ENCODE measurements at regions of chr18 and their contacts with region 1.

Region 1: DNA sequence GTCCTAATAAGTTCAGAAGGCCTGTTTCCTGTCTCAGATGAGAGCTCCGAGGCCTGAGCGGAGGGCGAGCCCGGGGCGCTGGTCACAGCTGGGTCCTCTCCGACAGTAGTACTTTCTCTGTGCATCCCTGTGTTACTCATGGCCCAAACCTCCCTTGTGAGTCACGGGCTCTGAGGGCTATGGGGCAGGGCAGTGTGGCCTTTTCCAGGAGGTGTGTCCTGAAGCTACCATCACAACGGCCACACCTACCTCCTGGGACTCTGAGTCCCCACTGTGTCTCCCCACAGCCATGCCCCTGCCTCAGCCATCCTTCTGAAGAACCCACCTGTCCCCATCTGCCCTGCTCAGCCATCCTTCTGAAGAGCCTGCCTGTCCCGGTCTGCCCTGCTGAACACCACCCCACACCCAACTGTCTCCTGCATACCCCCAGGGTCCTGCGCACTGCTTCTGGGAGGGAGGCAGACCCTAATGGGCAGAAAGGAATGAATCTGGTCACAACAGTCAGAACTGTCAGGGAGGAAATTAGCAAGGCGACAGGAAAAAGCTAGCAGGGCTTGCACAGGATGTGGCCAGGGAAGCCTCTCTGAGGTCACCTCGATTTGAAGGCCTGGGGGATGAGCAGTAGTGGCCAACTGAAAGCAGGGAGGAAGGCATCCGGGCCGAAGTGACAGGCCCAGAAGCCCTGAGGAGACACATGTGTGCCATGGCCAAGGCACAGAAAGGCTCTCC is 145.4 kb upstream of the RIOK3 start:
- DNase-seq: no peak
- ATAC-seq: no peak
- H3K4me3 ChIP-seq: no peak overlapping the region
- H3K27ac ChIP-seq: no peak overlapping the region
- H3K4me1 ChIP-seq: no peaks in the 10 kb centered on the region
- H3K27me3 ChIP-seq: no peaks in the 10 kb centered on the region

Region 2: DNA sequence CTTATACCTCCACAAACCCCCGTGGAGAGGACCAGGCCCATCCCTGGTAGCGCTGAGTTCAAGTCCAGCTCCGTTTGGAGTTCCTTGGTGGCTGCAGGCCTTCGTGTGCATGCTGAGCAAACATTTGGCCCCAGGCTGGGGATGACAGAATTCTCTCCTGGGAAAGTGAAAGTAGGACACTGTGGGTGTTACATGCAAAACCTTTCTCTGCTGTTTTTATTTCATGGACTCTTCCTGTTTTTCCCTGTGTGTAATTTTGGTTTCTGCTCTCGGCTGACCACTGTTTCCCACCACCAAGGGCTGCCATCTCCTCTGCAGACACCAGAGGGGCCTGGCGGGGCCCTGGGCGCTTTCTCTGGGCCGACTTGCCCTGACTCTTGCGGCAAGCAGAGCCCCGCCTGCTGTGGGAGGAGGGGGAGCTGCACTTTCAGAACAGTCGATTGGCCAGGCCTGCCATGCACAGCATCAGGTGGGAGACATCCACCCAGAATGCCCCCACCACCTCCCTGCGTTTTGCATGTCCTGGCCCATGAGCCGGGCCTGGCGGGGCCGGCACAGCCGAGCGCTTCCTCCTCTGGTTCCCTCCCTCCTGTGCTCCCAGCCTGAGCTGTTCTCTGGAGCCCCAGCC is 70.1 kb before region 1 on chr18:
- intact Hi-C with region 1: loop called in 1 of 2 experiments (anchors 5 kb)
- DNase-seq: peak; percentile 81 to 87
- ATAC-seq: peak; percentile 85
- H3K4me3 ChIP-seq: peak overlapping the region in 1 of 2 donors; percentile 1
- H3K27ac ChIP-seq: peak overlapping the region; percentile 18 to 97
- H3K4me1 ChIP-seq: no peaks in the 10 kb centered on the region
- H3K27me3 ChIP-seq: no peaks in the 10 kb centered on the region

Region 3: DNA sequence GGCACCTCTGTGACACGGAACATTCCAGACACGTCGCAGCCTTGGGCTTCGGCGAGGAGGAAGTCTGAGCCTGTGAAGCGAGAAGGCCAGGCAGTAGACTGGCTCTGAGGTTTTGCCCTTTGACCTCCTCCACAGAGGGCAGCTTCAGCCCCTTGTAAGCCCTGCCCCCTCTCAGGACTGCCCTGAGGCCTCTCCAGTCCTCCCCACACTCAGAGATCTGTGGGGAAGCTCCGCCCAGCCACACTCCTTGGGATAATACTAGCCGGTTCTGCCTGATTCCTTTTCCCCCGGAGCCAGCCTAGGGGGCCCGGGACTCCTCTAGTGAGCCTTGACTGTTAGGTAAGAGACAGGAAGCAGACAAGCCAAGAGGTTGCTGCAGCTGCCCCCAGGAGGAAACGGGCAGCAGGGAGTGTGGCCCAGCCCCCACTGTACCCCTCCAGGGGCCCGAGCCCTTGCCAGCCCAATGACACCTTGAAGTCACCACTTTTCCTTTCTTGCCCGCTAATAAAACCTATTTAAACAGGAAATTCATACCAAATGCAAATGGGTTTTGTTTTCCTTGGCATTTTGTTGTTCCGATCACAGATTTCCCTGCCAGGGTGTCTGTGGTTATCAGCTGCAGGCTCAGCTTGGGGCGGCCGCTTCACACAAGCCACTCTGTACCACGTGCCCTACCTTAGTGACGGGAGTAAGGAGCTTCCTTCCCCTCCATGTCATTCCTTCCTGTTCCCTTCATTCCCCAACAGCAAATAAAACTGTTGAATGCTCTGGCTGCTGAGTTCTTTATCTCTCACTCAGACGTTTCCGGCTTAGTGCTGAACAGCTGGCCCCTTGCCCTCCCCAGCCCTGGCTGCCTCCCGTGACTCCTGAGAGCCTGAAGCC is 47.8 kb before region 1 on chr18:
- intact Hi-C with region 1: loop called in 1 of 2 experiments (anchors 5 kb)
- DNase-seq: peak; percentile 91 to 93
- ATAC-seq: peak; percentile 81
- H3K4me3 ChIP-seq: no peak overlapping the region
- H3K27ac ChIP-seq: peak overlapping the region; percentile 64 to 84
- H3K4me1 ChIP-seq: no peaks in the 10 kb centered on the region
- H3K27me3 ChIP-seq: no peaks in the 10 kb centered on the region

Region 4: DNA sequence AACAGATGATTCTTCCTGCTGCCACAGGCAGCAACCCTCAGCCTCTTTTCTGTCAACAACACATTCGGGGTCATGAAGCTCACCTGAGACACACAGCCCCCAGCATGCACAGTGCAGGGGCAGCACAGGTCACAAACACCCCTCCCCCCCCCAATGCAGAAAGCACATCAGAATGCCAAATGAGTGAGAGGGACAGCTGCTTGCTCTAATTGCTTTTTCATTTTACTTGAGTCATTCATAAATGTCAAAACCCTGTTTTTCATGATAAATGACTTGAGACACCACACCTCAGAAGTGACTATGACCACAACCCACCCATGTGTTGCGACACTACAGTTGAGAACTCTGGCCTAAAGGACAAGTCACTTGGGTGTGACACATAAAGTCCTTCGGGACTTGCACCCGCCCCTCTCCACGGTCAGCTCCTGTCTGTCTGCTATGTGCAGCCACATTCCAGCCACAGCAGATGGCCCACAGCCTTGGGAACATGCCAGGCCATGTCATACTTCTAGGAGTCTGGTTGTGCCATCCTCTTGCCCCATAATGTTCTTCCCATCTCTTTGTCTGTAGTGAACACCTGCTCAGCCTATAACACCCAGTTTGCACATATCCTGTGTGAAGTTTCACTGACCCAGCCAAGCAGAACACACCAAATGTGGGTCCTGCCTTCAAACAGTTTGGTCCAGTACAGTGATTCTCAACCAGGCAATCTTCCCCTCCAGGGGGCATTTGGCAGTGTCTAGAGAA is 115.1 kb after region 1 on chr18:
- intact Hi-C with region 1: no loop called
- DNase-seq: no peak
- ATAC-seq: no peak
- H3K4me3 ChIP-seq: no peak overlapping the region
- H3K27ac ChIP-seq: no peak overlapping the region
- H3K4me1 ChIP-seq: no peaks in the 10 kb centered on the region
- H3K27me3 ChIP-seq: no peaks in the 10 kb centered on the region

Measured in aorta (tissue), 5 donors.